ENCODE measurements at regions of chr1 and their contacts with region 1.

Region 1: DNA sequence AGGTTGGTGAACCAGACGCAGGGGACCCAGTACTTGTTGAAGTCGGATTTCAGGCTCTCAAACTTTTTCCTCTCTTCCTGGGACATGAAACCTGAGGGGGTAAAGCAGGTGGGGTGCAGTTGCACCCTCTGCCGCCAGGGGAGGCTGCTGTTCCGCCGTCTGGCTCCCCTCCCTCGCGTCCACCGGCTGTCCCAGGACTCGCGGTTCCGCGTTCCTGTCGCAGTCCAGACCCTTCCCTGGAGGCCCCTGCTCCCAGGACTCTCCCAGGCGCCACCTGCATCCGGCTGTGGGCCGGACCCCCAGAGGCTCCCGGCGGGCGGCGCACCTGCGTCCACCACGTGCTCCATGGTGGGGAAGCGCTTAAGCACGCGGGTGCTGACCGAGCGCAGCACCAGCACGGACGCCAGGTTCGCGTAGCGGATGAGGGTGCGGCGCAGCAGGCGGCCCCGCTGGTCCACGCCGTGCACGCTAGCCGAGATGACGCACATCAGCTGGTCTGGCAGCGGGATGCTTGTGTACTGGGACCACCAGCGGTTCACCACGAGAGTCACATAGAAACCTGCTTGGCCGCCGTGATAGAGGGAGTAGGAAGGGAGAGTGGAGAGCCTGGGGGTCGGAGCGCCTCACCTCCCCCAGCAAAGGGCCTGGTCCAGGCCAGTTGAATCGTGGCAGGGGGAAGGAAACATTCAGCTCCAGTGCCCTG is 1.7 kb downstream of the BEST4 start:
- DNase-seq: peak; percentile 84
- H3K4me3 ChIP-seq: peak overlapping the region; percentile 26 to 63 (median 42)
- H3K27ac ChIP-seq: peak overlapping the region; percentile 47 to 72 (median 60)
- H3K4me1 ChIP-seq: peaks cover 11 to 34% (median 22%) of the 10 kb centered on the region in 4 donors
- H3K27me3 ChIP-seq: no peaks in the 10 kb centered on the region
- CTCF ChIP-seq: peak; percentile 100
- EP300 ChIP-seq: no peak
- POLR2A ChIP-seq: peak; percentile 14

Region 2: GRCh38 chr1:44730741-44731512 is 55.4 kb before region 1 on chr1 and contains the start of gene RNU5D-1:
- in situ Hi-C with region 1: no loop called
- intact Hi-C with region 1: no loop called
- DNase-seq: peak; percentile 97
- H3K4me3 ChIP-seq: peak within 1 kb of the TSS in 3 of 4 donors; percentile 9 to 38 (median 20)
- H3K27ac ChIP-seq: peak within 1 kb of the TSS; percentile 87 to 95 (median 91)
- H3K4me1 ChIP-seq: peaks cover 5 to 28% (median 13%) of the 10 kb centered on the region in 4 donors
- H3K27me3 ChIP-seq: no peaks in the 10 kb centered on the region
- CTCF ChIP-seq: peak; percentile 84 to 94 (median 87)
- EP300 ChIP-seq: no peak
- POLR2A ChIP-seq: peak; percentile 98
- total RNA-seq, gene RNU5D-1: not detected

Region 3: DNA sequence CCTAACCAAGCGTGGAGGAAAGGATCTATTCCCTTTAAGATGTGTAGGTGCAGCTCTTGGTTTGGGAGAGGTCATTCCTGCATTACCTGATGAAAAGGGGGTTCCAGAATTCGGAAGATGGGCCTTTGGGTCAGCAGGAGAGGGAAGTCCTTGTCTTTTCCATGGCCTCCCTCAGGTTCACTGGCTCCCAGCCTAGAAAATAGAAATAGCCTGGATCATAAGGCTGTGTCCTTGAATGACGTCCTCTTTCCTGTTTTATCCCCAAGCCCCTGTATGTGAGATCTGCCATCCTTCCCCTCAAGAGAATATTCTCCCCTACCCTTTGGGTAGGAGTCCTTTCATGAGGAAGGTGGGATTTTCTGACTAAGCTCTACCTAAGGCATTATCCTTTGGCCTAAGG is 25.4 kb before region 1 on chr1:
- in situ Hi-C with region 1: no loop called
- intact Hi-C with region 1: loop called (anchors 1 kb)
- DNase-seq: no peak
- H3K4me3 ChIP-seq: no peak overlapping the region
- H3K27ac ChIP-seq: no peak overlapping the region
- H3K4me1 ChIP-seq: no peaks in the 10 kb centered on the region
- H3K27me3 ChIP-seq: no peaks in the 10 kb centered on the region
- CTCF ChIP-seq: no peak
- EP300 ChIP-seq: no peak
- POLR2A ChIP-seq: no peak

Region 4: GRCh38 chr1:44835738-44836675 is 49.7 kb after region 1 on chr1:
- in situ Hi-C with region 1: no loop called
- intact Hi-C with region 1: loop called (anchors 10 kb)
- DNase-seq: peak; percentile 90
- H3K4me3 ChIP-seq: no peak overlapping the region
- H3K27ac ChIP-seq: no peak overlapping the region
- H3K4me1 ChIP-seq: peaks cover 0 to 6% (median 2%) of the 10 kb centered on the region in 4 donors
- H3K27me3 ChIP-seq: no peaks in the 10 kb centered on the region
- CTCF ChIP-seq: peak; percentile 76 to 85 (median 81)
- EP300 ChIP-seq: no peak
- POLR2A ChIP-seq: no peak